ENCODE measurements at regions of chr14 and their contacts with region 1.

Region 1: GRCh38 chr14:22200977-22201605 is 387.9 kb downstream of the DAD1 start:
- DNase-seq: peak; percentile 15 to 47
- H3K4me3 ChIP-seq: no peak overlapping the region
- H3K27ac ChIP-seq: no peak overlapping the region
- H3K4me1 ChIP-seq: no peaks in the 10 kb centered on the region
- H3K27me3 ChIP-seq: no peaks in the 10 kb centered on the region
- CTCF ChIP-seq: peak; percentile 79

Region 2: DNA sequence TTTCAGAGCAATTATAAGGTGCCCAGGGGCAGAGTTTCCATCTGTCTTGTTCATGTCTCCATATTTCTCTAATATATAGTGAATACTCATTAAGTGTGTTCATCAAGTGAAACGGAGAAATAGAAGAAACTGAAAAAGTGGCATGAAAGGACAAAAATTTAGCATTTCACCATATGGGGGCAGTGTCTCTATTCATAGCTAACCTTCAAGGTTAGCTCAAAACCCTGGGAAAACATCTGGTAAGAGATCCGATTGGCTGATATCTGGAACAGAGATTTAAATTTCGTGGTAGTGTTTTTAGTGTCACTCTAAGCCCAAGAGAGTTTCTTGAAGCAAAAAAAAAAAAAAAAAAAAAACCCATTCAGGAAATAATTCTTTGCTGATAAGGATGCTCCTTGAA is 20.4 kb after region 1 on chr14:
- CTCF ChIA-PET with region 1: interaction called, 18 read pairs
- POLR2A ChIA-PET with region 1: no interaction called
- intact Hi-C with region 1: no loop called
- DNase-seq: no peak
- H3K4me3 ChIP-seq: no peak overlapping the region
- H3K27ac ChIP-seq: no peak overlapping the region
- H3K4me1 ChIP-seq: peaks cover 18% of the 10 kb centered on the region
- H3K27me3 ChIP-seq: no peaks in the 10 kb centered on the region
- CTCF ChIP-seq: peak; percentile 48; the same call in 1 of the 2 replicates

Measured in PC-9 (cell line).